CD4-positive, alpha-beta memory T cell (primary cell): ENCODE measurements at regions of chr17 and their contacts with region 1.

Region 1: GRCh38 chr17:44708401-44709181 is at the start of gene DBF4B:
- DNase-seq: peak; percentile 86 to 88 (median 86)
- H3K4me3 ChIP-seq: peak within 1 kb of the TSS; percentile 69 to 76
- H3K4me3 Mint-ChIP-seq: no peak within 1 kb of the TSS
- H3K27ac ChIP-seq: peak within 1 kb of the TSS; percentile 57
- H3K27ac Mint-ChIP-seq: peak within 1 kb of the TSS in 2 of 7 donors; percentile 36
- H3K4me1 ChIP-seq: peaks cover 16% of the 10 kb centered on the region
- H3K4me1 Mint-ChIP-seq: peaks cover 0 to 3% (median 2%) of the 10 kb centered on the region in 4 donors
- H3K27me3 ChIP-seq: no peaks in the 10 kb centered on the region
- H3K27me3 Mint-ChIP-seq: peaks cover 4% of the 10 kb centered on the region in 2 donors
- total RNA-seq, gene DBF4B: 8.1 to 8.4 TPM

Region 2: DNA sequence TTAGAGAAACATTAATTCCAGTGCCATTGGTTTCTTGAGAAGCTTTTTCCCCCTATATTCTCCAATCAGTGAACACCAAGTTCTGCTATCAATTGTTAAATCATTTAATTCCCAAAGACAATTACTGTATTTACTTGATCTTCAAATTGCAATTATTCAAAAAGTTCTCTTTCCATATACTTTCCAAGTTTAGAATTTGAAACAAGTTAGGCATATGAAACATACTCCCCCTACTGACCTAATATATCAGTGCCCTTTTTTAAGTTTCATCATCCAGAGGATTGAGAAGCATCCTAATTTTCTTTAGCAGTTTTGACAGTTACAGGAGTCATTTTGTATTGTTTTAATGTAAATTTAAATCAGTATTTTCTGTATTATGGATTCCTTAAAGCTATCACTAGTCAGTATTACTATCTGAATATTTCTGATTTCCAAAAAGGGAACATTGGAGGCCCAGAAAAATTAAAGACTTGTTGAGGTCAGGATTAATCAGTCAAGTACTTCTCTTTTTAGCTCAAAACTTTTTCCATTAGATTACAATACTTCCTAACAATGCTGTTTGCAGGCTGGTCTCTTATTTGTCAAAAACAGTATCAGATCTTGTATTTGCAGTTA is 36.0 kb before region 1 on chr17:
- CTCF ChIA-PET with region 1: no interaction called
- POLR2A ChIA-PET with region 1: no interaction called
- intact Hi-C with region 1: no loop called
- DNase-seq: no peak
- H3K4me3 ChIP-seq: no peak overlapping the region
- H3K4me3 Mint-ChIP-seq: no peak overlapping the region
- H3K27ac ChIP-seq: no peak overlapping the region
- H3K27ac Mint-ChIP-seq: no peak overlapping the region
- H3K4me1 ChIP-seq: no peaks in the 10 kb centered on the region
- H3K4me1 Mint-ChIP-seq: no peaks in the 10 kb centered on the region
- H3K27me3 ChIP-seq: no peaks in the 10 kb centered on the region
- H3K27me3 Mint-ChIP-seq: peaks cover 0 to 2% of the 10 kb centered on the region in 2 donors

Region 3: GRCh38 chr17:44689477-44690217 is 18.9 kb before region 1 on chr17 and contains the start of gene CCDC43:
- CTCF ChIA-PET with region 1: interaction called, 8 read pairs
- POLR2A ChIA-PET with region 1: interaction called, 42 read pairs
- intact Hi-C with region 1: loop called (anchors 1 kb)
- DNase-seq: peak; percentile 91 to 93 (median 91)
- H3K4me3 ChIP-seq: peak within 1 kb of the TSS; percentile 76 to 78
- H3K4me3 Mint-ChIP-seq: peak within 1 kb of the TSS; percentile 96 to 99 (median 98)
- H3K27ac ChIP-seq: peak within 1 kb of the TSS; percentile 84
- H3K27ac Mint-ChIP-seq: peak within 1 kb of the TSS; percentile 92 to 98 (median 98)
- H3K4me1 ChIP-seq: peaks cover 17% of the 10 kb centered on the region
- H3K4me1 Mint-ChIP-seq: peaks cover 19 to 39% (median 25%) of the 10 kb centered on the region in 4 donors
- H3K27me3 ChIP-seq: no peaks in the 10 kb centered on the region
- H3K27me3 Mint-ChIP-seq: no peaks in the 10 kb centered on the region
- total RNA-seq, gene CCDC43: 17.9 to 18.8 TPM

Region 4: DNA sequence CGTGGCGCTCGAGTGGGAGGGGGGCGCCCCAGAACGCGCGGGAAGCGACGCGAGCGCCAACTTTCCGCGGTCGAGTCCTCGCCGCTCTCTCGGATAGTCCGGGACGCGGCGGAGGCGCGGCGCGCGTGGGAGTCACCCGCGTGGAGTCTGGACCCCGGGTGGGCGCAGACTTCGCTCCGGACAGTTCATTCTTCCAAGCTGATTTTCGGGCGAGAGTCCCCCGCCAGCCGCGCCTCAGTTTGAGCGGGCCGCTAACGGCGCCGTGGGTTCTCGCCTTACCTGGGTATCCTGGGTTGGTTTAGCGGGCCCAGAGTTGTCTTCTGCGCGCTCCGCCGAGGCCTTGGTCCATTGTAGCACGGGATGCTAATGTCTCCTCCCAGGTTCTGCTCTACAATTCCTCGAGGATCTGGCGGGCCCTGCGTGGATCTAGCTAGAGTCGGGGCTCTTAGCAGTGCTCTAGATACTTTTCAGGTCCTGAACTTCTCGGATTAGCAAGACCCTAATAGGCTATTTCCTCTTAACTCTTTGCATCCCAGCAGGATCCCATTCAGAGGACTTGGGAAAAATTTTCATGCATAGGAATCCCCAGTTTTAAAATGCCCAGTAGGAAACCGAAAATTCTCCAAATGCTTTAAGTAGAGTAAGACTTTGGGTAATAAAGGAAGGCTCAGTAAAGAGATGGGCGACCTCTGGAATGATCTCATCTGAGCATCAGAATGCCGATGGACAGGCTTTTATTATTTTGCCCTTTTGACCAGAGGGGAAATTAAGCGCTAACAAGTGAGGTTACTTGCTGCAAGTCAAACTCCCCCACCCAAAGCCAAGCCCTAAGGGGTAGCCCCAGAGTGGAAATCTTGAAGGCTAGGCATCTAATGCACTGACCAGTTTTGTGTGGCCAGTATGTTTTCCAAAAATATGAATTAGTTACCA is 122.0 kb after region 1 on chr17:
- CTCF ChIA-PET with region 1: no interaction called
- POLR2A ChIA-PET with region 1: no interaction called
- intact Hi-C with region 1: no loop called
- DNase-seq: peak in 4 of 5 donors; percentile 10 to 22 (median 14)
- H3K4me3 ChIP-seq: no peak overlapping the region
- H3K4me3 Mint-ChIP-seq: peak overlapping the region; percentile 58 to 85 (median 70)
- H3K27ac ChIP-seq: no peak overlapping the region
- H3K27ac Mint-ChIP-seq: peak overlapping the region in 1 of 7 donors; percentile 69
- H3K4me1 ChIP-seq: peaks cover 16% of the 10 kb centered on the region
- H3K4me1 Mint-ChIP-seq: peaks cover 8 to 15% (median 10%) of the 10 kb centered on the region in 4 donors
- H3K27me3 ChIP-seq: peaks cover 49% of the 10 kb centered on the region
- H3K27me3 Mint-ChIP-seq: peaks cover 32 to 52% of the 10 kb centered on the region in 2 donors